PC-9 (cell line): ENCODE measurements at regions of chr19 and their contacts with region 1.

Region 1: DNA sequence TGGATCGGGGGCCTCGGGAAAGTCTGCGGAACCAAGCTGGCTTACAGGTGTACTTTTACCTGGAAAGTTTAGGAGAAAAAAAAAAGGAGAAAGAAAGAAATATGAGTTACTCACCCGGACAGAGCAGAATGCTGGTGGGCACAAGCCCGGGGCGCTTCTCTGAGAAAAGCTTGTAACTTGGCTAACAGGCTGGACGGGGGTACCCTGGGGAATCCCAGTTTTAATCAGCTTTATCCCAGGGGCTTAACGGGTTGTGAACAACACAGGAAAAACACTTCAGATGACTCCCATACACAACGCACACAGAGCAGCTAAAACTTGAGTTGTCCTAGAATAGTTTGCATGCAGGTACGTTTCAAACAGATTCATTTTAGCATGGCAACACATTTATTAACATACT is 37.3 kb downstream of the KLF2 start:
- DNase-seq: no peak
- H3K4me3 ChIP-seq: no peak overlapping the region
- H3K27ac ChIP-seq: no peak overlapping the region
- H3K4me1 ChIP-seq: no peaks in the 10 kb centered on the region
- H3K27me3 ChIP-seq: no peaks in the 10 kb centered on the region
- CTCF ChIP-seq: no peak

Region 2: DNA sequence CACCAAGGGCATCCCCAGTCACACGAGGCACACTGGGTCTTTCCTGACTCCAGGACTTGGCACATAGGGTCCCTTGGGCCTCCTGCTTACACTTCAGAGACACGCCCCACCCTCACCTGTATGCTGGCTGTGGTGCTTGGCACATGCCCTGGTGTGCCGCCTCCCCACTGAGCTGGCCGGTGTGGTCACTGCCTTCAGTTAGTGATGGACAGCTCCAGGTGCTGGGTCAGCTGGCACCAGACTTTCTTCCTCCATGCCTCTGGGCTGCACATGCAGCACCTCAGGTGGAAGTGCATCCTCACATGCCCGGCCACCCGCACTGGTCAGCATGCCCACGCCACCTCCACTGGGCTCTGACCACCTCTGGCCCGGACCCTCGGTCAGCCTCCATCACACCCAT is 15.6 kb after region 1 on chr19:
- CTCF ChIA-PET with region 1: interaction called, 11 read pairs
- POLR2A ChIA-PET with region 1: interaction called, 5 read pairs
- intact Hi-C with region 1: no loop called
- DNase-seq: no peak
- H3K4me3 ChIP-seq: no peak overlapping the region
- H3K27ac ChIP-seq: no peak overlapping the region
- H3K4me1 ChIP-seq: no peaks in the 10 kb centered on the region
- H3K27me3 ChIP-seq: no peaks in the 10 kb centered on the region
- CTCF ChIP-seq: no peak

Region 3: GRCh38 chr19:16671652-16672274 is 309.8 kb after region 1 on chr19:
- CTCF ChIA-PET with region 1: no interaction called
- POLR2A ChIA-PET with region 1: no interaction called
- intact Hi-C with region 1: no loop called
- DNase-seq: no peak
- H3K4me3 ChIP-seq: no peak overlapping the region
- H3K27ac ChIP-seq: no peak overlapping the region
- H3K4me1 ChIP-seq: peaks cover 2% of the 10 kb centered on the region; the same call in 1 of the 2 replicates
- H3K27me3 ChIP-seq: no peaks in the 10 kb centered on the region
- CTCF ChIP-seq: no peak